SK-N-SH (cell line): ENCODE measurements at regions of chr17 and their contacts with region 1.

Region 1: DNA sequence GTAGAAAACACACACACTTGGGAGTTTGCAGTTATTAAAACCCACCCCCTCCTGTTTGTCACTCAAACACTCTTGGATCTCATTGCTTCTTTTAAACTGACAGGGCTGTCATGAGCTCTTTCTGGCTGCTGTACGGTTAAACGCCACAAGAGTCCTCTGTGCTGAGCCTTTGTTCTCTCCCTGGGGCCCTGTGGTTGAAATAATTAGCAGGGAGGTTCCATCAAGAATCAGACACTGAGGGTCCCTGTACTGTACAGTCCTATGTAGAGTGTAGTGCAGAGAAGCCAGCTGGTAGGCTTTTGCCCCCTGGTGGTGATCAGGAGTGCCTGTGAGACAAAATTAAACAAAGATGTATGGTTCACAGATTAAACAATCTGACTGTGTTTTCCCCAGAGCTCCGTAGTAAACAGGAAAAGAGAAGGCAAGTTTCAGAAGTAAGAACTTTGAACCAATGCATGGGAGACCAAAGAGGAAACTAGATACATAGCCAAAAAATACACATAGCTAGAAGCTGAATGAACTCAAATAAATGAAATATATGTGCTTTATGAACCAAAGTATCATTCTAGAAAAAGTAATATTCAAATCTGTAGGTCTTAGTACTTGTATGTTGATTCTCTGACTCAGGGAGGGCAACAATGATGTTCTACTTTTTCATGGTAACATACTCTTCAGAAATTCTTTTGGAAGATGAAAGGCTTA is 1.4 kb upstream of the SSH2 start:
- DNase-seq: peak; percentile 75
- H3K4me3 ChIP-seq: peak overlapping the region; percentile 84 to 99
- H3K27ac ChIP-seq: peak overlapping the region; percentile 80 to 83
- H3K4me1 ChIP-seq: peaks cover 21 to 24% of the 10 kb centered on the region in 2 experiments; a peak in 3 of 4 replicates
- H3K27me3 ChIP-seq: no peaks in the 10 kb centered on the region
- CTCF ChIP-seq: peak; percentile 96
- EP300 ChIP-seq: no peak
- RAD21 ChIP-seq: peak; percentile 93

Region 2: DNA sequence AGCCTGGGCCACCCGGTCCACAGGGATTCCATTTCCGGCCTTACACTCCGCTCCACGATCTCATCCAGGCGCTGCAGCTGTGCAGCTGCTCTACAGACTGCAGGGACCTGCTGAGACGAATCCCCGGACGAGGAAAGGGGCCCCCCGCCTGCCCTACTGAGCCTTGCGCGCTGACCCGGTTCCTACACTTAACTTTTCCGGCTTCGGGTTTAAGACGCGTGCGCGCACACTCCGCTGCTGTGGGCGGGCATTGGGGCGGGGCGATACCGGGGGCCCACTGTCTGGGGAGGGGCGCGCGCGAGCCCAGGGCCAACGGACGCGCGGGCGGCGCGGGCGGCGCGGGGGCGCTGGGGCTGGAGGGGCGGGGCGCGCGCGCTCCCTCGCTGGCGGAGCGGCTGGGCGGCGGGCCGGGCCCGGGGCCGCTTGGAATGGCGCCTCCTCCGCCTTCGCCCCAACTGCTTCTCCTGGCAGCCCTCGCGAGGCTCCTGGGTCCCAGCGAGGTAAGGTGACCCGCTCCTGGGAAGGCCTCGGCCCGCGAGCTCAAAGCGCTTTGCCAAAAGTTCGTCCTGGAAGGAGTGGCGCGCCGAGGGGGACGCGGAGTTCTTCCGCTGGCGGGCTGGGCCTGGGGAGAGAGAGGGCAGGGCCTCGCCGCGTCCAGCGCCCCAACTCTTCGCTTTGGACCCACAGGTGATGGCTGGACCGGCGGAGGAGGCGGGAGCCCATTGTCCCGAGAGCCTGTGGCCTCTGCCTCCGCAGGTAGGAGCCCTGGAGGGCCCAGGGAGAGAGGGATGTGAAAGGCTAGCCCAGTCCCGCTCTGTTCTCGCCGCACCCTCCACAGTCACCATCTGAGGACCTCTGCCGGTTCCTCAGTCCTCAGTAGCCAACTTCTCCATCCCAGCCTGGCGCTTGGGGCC is 362.8 kb before region 1 on chr17 and contains the start of gene TP53I13:
- CTCF ChIA-PET with region 1: interaction called, 14 read pairs
- POLR2A ChIA-PET with region 1: no interaction called
- DNase-seq: peak; percentile 96
- H3K4me3 ChIP-seq: peak within 1 kb of the TSS; percentile 76 to 85
- H3K27ac ChIP-seq: peak within 1 kb of the TSS; percentile 77 to 89
- H3K4me1 ChIP-seq: peaks cover 8 to 27% of the 10 kb centered on the region in 2 experiments; a peak in 1 of 4 replicates
- H3K27me3 ChIP-seq: no peaks in the 10 kb centered on the region
- CTCF ChIP-seq: no peak
- EP300 ChIP-seq: no peak
- RAD21 ChIP-seq: no peak
- polyA plus RNA-seq, gene TP53I13: 39.2 and 45.3 TPM in 2 replicates

Region 3: DNA sequence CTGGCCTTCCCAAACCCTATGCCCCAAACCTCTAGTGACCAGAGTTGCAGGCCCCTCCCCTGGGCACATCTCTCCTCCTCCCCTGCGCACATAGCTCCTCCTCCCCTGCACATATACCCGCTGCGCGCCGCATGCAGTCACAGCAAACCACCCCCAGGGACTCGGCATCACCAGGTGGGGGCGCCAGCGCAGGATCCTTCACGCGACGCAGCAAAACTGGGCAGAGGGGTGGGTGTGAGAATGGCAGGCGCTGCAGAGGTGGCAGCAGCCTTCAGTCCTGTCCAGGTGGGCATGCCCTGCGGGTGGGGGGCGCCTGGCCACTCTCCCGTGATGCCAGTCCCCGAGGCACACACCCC is 314.3 kb before region 1 on chr17:
- CTCF ChIA-PET with region 1: interaction called, 11 read pairs
- POLR2A ChIA-PET with region 1: interaction called, 3 read pairs
- DNase-seq: peak; percentile 88
- H3K4me3 ChIP-seq: no peak overlapping the region
- H3K27ac ChIP-seq: no peak overlapping the region; a peak in 1 of 4 replicates
- H3K4me1 ChIP-seq: peaks cover 20 to 44% of the 10 kb centered on the region in 2 experiments; a peak in 3 of 4 replicates
- H3K27me3 ChIP-seq: no peaks in the 10 kb centered on the region
- CTCF ChIP-seq: peak; percentile 47
- EP300 ChIP-seq: no peak
- RAD21 ChIP-seq: peak; percentile 31

Region 4: DNA sequence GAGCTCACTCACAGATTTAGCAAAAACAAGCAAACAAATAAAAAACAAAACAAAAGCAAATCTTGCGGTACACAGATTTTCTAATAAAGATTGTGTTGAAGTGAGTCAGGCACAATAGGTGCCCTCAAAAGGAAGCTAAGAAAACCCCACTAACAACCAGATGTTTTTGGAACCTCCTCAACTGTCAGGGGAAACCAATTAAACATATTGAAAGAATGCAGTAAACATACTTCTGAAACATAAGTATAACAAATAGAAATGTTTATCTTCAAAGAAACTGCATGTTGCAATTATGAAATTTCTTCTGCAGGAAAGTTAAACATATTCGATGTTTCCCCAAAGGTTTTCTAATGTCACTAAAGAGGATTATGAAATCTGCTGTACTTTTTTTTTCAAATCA is 198.2 kb before region 1 on chr17:
- CTCF ChIA-PET with region 1: no interaction called
- POLR2A ChIA-PET with region 1: no interaction called
- DNase-seq: no peak
- H3K4me3 ChIP-seq: no peak overlapping the region
- H3K27ac ChIP-seq: peak overlapping the region in 1 of 2 experiments; percentile 97; a peak in 2 of 4 replicates
- H3K4me1 ChIP-seq: peaks cover 22 to 32% of the 10 kb centered on the region in 2 experiments; a peak in 3 of 4 replicates
- H3K27me3 ChIP-seq: no peaks in the 10 kb centered on the region
- CTCF ChIP-seq: no peak
- EP300 ChIP-seq: no peak; a peak in 1 of 4 replicates
- RAD21 ChIP-seq: no peak

Region 5: DNA sequence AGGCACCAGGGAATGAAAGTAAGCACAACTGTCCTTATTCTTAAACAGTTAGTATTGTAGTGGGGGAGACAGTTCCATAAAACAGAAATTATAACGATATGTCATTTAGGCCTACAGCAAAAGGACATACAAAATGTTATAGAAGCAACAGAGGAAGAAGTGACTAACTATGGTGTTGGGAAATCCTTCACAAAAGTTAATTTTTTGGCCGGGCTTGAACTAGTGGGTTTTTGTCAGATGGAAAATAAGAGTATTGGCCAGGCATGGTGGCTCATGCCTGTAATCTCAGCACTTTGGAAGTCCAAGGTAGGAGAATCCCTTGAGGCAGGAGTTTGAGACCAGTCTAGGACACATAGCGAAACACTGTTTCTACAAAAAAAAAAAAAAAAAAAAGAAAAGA is 129.1 kb before region 1 on chr17:
- CTCF ChIA-PET with region 1: interaction called, 118 read pairs
- POLR2A ChIA-PET with region 1: interaction called, 4 read pairs
- DNase-seq: no peak
- H3K4me3 ChIP-seq: no peak overlapping the region
- H3K27ac ChIP-seq: no peak overlapping the region
- H3K4me1 ChIP-seq: peaks cover 0 to 3% of the 10 kb centered on the region in 2 experiments; a peak in 1 of 4 replicates
- H3K27me3 ChIP-seq: no peaks in the 10 kb centered on the region
- CTCF ChIP-seq: no peak
- EP300 ChIP-seq: no peak
- RAD21 ChIP-seq: no peak

Region 6: GRCh38 chr17:29844339-29845048 is 86.9 kb before region 1 on chr17:
- CTCF ChIA-PET with region 1: interaction called, 11 read pairs
- POLR2A ChIA-PET with region 1: no interaction called
- DNase-seq: peak; percentile 41
- H3K4me3 ChIP-seq: no peak overlapping the region
- H3K27ac ChIP-seq: no peak overlapping the region
- H3K4me1 ChIP-seq: peaks cover 11 to 14% of the 10 kb centered on the region in 2 experiments; a peak in 2 of 4 replicates
- H3K27me3 ChIP-seq: no peaks in the 10 kb centered on the region
- CTCF ChIP-seq: no peak
- EP300 ChIP-seq: no peak
- RAD21 ChIP-seq: no peak

Region 7: DNA sequence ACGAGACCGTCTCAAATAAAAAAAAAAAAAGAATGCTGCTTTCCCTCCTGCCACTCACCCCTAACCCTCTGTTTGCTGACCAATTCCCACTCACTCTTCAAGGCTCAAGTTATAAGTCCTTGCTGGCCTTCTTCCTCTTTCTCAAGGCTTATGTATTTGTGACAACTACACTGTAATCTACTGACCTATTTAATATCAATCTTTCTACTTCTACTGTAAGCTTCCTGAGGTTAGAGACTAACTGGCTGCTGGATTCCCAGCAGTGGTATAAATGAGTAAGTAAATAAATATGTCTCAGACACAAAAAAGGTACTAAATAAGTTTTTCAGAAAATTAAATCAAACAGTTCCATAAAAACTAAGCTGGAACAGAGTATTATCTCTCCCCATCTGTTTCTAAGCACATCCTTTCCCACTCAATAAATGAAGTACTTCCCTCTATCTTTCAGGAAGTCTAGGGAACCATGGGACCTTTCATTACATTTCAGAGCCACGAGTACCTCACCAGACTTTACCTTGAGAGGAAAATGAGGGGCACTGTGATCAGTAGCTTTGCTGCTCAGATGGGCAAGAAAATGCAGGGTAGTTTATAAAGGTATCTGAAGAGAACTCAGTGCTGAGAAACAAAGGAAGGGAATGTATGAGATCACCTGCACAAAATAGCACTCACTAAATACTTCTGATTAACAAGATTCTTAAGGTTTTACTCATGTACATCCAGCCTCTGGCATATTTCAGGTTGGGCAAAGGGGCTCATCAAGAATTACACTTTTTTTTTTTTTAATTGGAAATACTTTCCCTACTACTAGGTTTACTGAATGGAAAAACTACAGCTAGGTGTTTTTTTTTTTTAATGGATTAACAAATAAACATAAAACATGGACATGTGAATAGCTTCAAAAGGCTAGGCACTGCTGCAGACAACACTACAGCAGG is 12.2 kb before region 1 on chr17:
- CTCF ChIA-PET with region 1: interaction called, 21 read pairs
- POLR2A ChIA-PET with region 1: interaction called, 4 read pairs
- DNase-seq: no peak
- H3K4me3 ChIP-seq: no peak overlapping the region
- H3K27ac ChIP-seq: peak overlapping the region; percentile 34 to 79; a peak in 3 of 4 replicates
- H3K4me1 ChIP-seq: peaks cover 2 to 11% of the 10 kb centered on the region in 2 experiments; a peak in 2 of 4 replicates
- H3K27me3 ChIP-seq: no peaks in the 10 kb centered on the region
- CTCF ChIP-seq: no peak
- EP300 ChIP-seq: no peak
- RAD21 ChIP-seq: no peak

Region 8: DNA sequence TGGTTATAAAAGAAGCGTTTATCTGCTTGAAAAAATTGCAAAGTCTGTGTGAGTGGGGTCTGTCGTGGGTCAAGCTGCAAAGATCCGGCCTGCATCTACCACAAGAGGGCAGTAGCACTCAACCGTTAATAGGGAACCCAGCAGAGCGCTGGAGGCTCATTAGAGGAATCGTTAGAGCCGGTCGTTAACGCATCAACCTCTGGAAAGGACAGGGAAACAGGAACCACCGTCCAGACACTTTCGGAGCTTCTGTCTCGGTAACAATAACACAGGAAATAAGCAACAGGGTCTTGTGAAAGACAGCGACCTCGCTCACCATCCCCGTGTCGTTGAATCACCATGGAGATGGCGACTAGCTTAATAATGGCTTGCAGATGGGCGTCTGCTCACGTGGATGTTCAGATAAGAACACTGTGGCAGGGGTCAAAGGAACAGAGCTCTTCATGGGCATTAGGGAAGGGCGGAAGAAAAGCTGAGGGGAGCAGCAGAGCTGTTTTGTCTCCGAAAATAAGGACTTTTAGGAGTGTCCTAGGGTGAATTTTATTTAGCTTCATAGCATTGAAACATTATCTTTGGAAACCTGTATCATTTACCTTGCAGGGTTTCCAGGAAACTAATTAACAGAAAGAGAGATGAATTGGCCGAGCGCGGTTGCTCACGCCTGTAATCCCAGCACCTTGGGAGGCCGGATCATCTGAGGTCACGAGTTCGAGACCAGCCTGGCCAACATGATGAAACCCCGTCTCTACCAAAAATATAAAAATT is 173.4 kb after region 1 on chr17:
- CTCF ChIA-PET with region 1: interaction called, 10 read pairs
- POLR2A ChIA-PET with region 1: no interaction called
- DNase-seq: peak; percentile 79
- H3K4me3 ChIP-seq: peak overlapping the region; percentile 55 to 62
- H3K27ac ChIP-seq: peak overlapping the region; percentile 17 to 95; a peak in 3 of 4 replicates
- H3K4me1 ChIP-seq: peaks cover 0 to 2% of the 10 kb centered on the region in 2 experiments; a peak in 1 of 4 replicates
- H3K27me3 ChIP-seq: no peaks in the 10 kb centered on the region
- CTCF ChIP-seq: peak; percentile 98
- EP300 ChIP-seq: peak in 1 of 2 experiments; percentile 49; a peak in 2 of 4 replicates
- RAD21 ChIP-seq: peak; percentile 90

Region 9: GRCh38 chr17:30116661-30117551 is 185.5 kb after region 1 on chr17 and contains the start of gene NSRP1:
- CTCF ChIA-PET with region 1: no interaction called
- POLR2A ChIA-PET with region 1: no interaction called
- DNase-seq: peak; percentile 87
- H3K4me3 ChIP-seq: peak within 1 kb of the TSS; percentile 76 to 82
- H3K27ac ChIP-seq: peak within 1 kb of the TSS; percentile 95
- H3K4me1 ChIP-seq: peaks cover 3 to 9% of the 10 kb centered on the region in 2 experiments; a peak in 2 of 4 replicates
- H3K27me3 ChIP-seq: no peaks in the 10 kb centered on the region
- CTCF ChIP-seq: no peak
- EP300 ChIP-seq: no peak
- RAD21 ChIP-seq: no peak
- polyA plus RNA-seq, gene NSRP1: 9.6 and 10.8 TPM in 2 replicates